Thyroid gland (tissue), 4 donors: ENCODE measurements at regions of chr20 and their contacts with region 1.

Region 1: GRCh38 chr20:62407221-62407992 is at the start of gene CABLES2:
- DNase-seq: peak; percentile 94 to 95
- H3K4me3 ChIP-seq: peak within 1 kb of the TSS; percentile 43 to 67 (median 49)
- H3K27ac ChIP-seq: peak within 1 kb of the TSS in 2 of 3 donors; percentile 7 to 32
- H3K4me1 ChIP-seq: peaks cover 36 to 47% of the 10 kb centered on the region in 2 donors
- H3K27me3 ChIP-seq: no peaks in the 10 kb centered on the region
- CTCF ChIP-seq: peak in 2 of 6 experiments; percentile 35 to 36
- POLR2A ChIP-seq: peak in 1 of 2 donors; percentile 68
- total RNA-seq, gene CABLES2: 5.8 to 8.5 (median 7.7) TPM

Region 2: GRCh38 chr20:62030834-62031434 is 376.5 kb before region 1 on chr20:
- intact Hi-C with region 1: no loop called
- DNase-seq: no peak
- H3K4me3 ChIP-seq: no peak overlapping the region
- H3K27ac ChIP-seq: no peak overlapping the region
- H3K4me1 ChIP-seq: peaks cover 5 to 7% of the 10 kb centered on the region in 2 donors
- H3K27me3 ChIP-seq: no peaks in the 10 kb centered on the region
- CTCF ChIP-seq: no peak
- POLR2A ChIP-seq: no peak

Region 3: GRCh38 chr20:62237801-62238571 is 169.4 kb before region 1 on chr20 and contains the start of gene OSBPL2:
- intact Hi-C with region 1: loop called (anchors 5 kb)
- DNase-seq: peak; percentile 99 to 100
- H3K4me3 ChIP-seq: peak within 1 kb of the TSS; percentile 63 to 81 (median 72)
- H3K27ac ChIP-seq: peak within 1 kb of the TSS; percentile 41 to 74 (median 74)
- H3K4me1 ChIP-seq: peaks cover 15 to 16% of the 10 kb centered on the region in 2 donors
- H3K27me3 ChIP-seq: no peaks in the 10 kb centered on the region
- CTCF ChIP-seq: no peak
- POLR2A ChIP-seq: peak in 1 of 2 donors; percentile 69
- total RNA-seq, gene OSBPL2: 46.9 to 60.8 (median 50.8) TPM

Region 4: GRCh38 chr20:62303337-62304226 is 103.8 kb before region 1 on chr20:
- intact Hi-C with region 1: no loop called
- DNase-seq: peak; percentile 14 to 31
- H3K4me3 ChIP-seq: peak overlapping the region; percentile 34 to 74 (median 51)
- H3K27ac ChIP-seq: peak overlapping the region in 2 of 3 donors; percentile 33 to 59
- H3K4me1 ChIP-seq: peaks cover 19 to 23% of the 10 kb centered on the region in 2 donors
- H3K27me3 ChIP-seq: no peaks in the 10 kb centered on the region
- CTCF ChIP-seq: no peak
- POLR2A ChIP-seq: no peak